T-cell (primary cell): ENCODE measurements at regions of chr6 and their contacts with region 1.

Region 1: DNA sequence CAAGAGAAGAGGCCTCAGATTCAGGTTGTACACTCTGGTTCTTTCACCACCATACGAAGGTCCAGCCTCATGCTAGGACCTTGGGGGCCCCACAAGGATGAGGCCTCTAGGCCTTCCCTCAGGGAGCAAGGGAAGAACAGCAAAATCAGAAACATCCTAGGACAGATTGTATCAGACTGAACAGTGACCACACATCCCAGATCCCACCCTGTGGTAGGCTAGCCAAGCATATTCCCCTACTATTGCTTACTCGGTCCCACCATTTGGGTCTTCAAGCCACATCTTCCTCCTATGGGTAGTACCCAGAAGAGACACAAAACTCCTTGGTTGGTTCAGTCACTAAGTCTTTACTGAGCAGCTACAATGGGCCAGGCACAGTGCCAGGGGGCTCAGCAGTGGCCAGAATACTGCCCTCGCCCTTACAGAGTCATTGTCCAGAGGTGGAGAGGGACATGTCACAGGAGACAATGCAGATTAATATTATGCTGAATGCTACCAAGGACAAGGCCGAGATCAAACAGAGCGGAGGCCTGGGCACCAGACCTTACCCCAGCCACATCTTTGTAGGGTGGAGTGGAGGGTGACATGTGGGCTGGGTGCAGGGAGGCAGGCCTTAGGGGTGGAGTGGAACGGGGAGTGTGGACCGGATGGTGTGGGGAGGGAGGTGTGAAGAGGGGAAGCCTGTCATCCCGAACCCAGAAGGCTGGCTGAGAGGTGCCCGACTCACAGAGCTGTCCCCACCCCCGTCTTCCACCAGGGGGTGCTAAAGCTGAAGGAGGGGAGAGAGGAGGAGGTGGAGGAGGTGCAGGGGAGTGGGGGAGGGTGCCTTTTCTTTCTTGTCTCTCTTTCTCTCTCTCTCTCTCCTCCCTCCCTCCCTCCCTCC is 6.8 kb upstream of the MAPK13 start:
- DNase-seq: peak; percentile 81 to 94 (median 88)
- ATAC-seq: peak; percentile 71 to 81 (median 74)
- H3K4me3 ChIP-seq: no peak overlapping the region
- H3K4me3 Mint-ChIP-seq: peak overlapping the region in 1 of 3 donors; percentile 82
- H3K27ac ChIP-seq: peak overlapping the region; percentile 75
- H3K27ac Mint-ChIP-seq: peak overlapping the region; percentile 96 to 98
- H3K4me1 ChIP-seq: peaks cover 41 to 90% of the 10 kb centered on the region in 2 experiments
- H3K4me1 Mint-ChIP-seq: peaks cover 79 to 93% (median 85%) of the 10 kb centered on the region in 3 donors
- H3K27me3 ChIP-seq: no peaks in the 10 kb centered on the region
- H3K27me3 Mint-ChIP-seq: no peaks in the 10 kb centered on the region

Region 2: GRCh38 chr6:36094753-36095496 is 28.6 kb before region 1 on chr6:
- CTCF ChIA-PET with region 1: interaction called, 7 to 16 read pairs
- POLR2A ChIA-PET with region 1: interaction called in 1 of 2 experiments, 10 read pairs
- DNase-seq: peak; percentile 48 to 92 (median 76)
- ATAC-seq: peak; percentile 73 to 85 (median 78)
- H3K4me3 ChIP-seq: no peak overlapping the region
- H3K4me3 Mint-ChIP-seq: no peak overlapping the region
- H3K27ac ChIP-seq: peak overlapping the region; percentile 7
- H3K27ac Mint-ChIP-seq: peak overlapping the region; percentile 69 to 80
- H3K4me1 ChIP-seq: peaks cover 19 to 20% of the 10 kb centered on the region in 2 experiments
- H3K4me1 Mint-ChIP-seq: peaks cover 31 to 39% (median 33%) of the 10 kb centered on the region in 3 donors
- H3K27me3 ChIP-seq: no peaks in the 10 kb centered on the region
- H3K27me3 Mint-ChIP-seq: no peaks in the 10 kb centered on the region

Region 3: DNA sequence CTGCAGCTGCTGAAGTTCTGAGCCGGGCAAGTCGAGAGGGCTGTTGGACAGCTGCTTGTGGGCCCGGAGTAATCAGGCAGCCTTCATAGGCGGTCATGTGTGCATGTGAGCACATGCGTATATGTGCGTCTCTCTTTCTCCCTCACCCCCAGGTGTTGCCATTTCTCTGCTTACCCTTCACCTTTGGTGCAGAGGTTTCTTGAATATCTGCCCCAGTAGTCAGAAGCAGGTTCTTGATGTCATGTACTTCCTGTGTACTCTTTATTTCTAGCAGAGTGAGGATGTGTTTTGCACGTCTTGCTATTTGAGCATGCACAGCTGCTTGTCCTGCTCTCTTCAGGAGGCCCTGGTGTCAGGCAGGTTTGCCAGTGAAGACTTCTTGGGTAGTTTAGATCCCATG is 14.4 kb before region 1 on chr6:
- CTCF ChIA-PET with region 1: interaction called in 1 of 2 experiments, 11 read pairs
- POLR2A ChIA-PET with region 1: interaction called in 1 of 2 experiments, 3 read pairs
- DNase-seq: peak in 31 of 35 experiments; percentile 31 to 88 (median 59)
- ATAC-seq: peak; percentile 92 to 97 (median 94)
- H3K4me3 ChIP-seq: no peak overlapping the region
- H3K4me3 Mint-ChIP-seq: peak overlapping the region; percentile 5 to 54 (median 25)
- H3K27ac ChIP-seq: peak overlapping the region; percentile 77
- H3K27ac Mint-ChIP-seq: peak overlapping the region; percentile 93 to 96
- H3K4me1 ChIP-seq: peaks cover 29 to 39% of the 10 kb centered on the region in 2 experiments
- H3K4me1 Mint-ChIP-seq: peaks cover 40 to 63% (median 55%) of the 10 kb centered on the region in 3 donors
- H3K27me3 ChIP-seq: no peaks in the 10 kb centered on the region
- H3K27me3 Mint-ChIP-seq: no peaks in the 10 kb centered on the region